CD4-positive, alpha-beta T cell (primary cell): ENCODE measurements at regions of chr1 and their contacts with region 1.

Region 1: GRCh38 chr1:89261926-89262515 is 10.6 kb downstream of the GBP5 start:
- DNase-seq: no peak
- ATAC-seq: no peak
- H3K4me3 ChIP-seq: no peak overlapping the region
- H3K4me3 Mint-ChIP-seq: no peak overlapping the region
- H3K27ac ChIP-seq: no peak overlapping the region
- H3K27ac Mint-ChIP-seq: peak overlapping the region; percentile 15
- H3K4me1 ChIP-seq: peaks cover 35% of the 10 kb centered on the region
- H3K4me1 Mint-ChIP-seq: peaks cover 66% of the 10 kb centered on the region
- H3K27me3 ChIP-seq: no peaks in the 10 kb centered on the region
- H3K27me3 Mint-ChIP-seq: no peaks in the 10 kb centered on the region
- CTCF ChIP-seq: no peak

Region 2: GRCh38 chr1:88780485-88780884 is 481.5 kb before region 1 on chr1:
- CTCF ChIA-PET with region 1: no interaction called
- POLR2A ChIA-PET with region 1: no interaction called
- intact Hi-C with region 1: no loop called
- DNase-seq: no peak
- ATAC-seq: no peak
- H3K4me3 ChIP-seq: no peak overlapping the region
- H3K4me3 Mint-ChIP-seq: no peak overlapping the region
- H3K27ac ChIP-seq: no peak overlapping the region
- H3K27ac Mint-ChIP-seq: no peak overlapping the region
- H3K4me1 ChIP-seq: no peaks in the 10 kb centered on the region
- H3K4me1 Mint-ChIP-seq: no peaks in the 10 kb centered on the region
- H3K27me3 ChIP-seq: no peaks in the 10 kb centered on the region
- H3K27me3 Mint-ChIP-seq: no peaks in the 10 kb centered on the region
- CTCF ChIP-seq: no peak

Region 3: GRCh38 chr1:89206373-89206772 is 55.6 kb before region 1 on chr1:
- CTCF ChIA-PET with region 1: no interaction called
- POLR2A ChIA-PET with region 1: no interaction called
- intact Hi-C with region 1: loop called in 1 of 2 experiments (anchors 5 kb)
- DNase-seq: no peak
- ATAC-seq: no peak
- H3K4me3 ChIP-seq: no peak overlapping the region
- H3K4me3 Mint-ChIP-seq: no peak overlapping the region
- H3K27ac ChIP-seq: no peak overlapping the region
- H3K27ac Mint-ChIP-seq: no peak overlapping the region
- H3K4me1 ChIP-seq: peaks cover 1% of the 10 kb centered on the region
- H3K4me1 Mint-ChIP-seq: peaks cover 12% of the 10 kb centered on the region
- H3K27me3 ChIP-seq: no peaks in the 10 kb centered on the region
- H3K27me3 Mint-ChIP-seq: no peaks in the 10 kb centered on the region
- CTCF ChIP-seq: no peak

Region 4: GRCh38 chr1:90100566-90100965 is 838.5 kb after region 1 on chr1:
- CTCF ChIA-PET with region 1: no interaction called
- POLR2A ChIA-PET with region 1: no interaction called
- intact Hi-C with region 1: no loop called
- DNase-seq: no peak
- ATAC-seq: no peak
- H3K4me3 ChIP-seq: no peak overlapping the region
- H3K4me3 Mint-ChIP-seq: no peak overlapping the region
- H3K27ac ChIP-seq: no peak overlapping the region
- H3K27ac Mint-ChIP-seq: no peak overlapping the region
- H3K4me1 ChIP-seq: no peaks in the 10 kb centered on the region
- H3K4me1 Mint-ChIP-seq: no peaks in the 10 kb centered on the region
- H3K27me3 ChIP-seq: peaks cover 2 to 6% of the 10 kb centered on the region in 2 experiments
- H3K27me3 Mint-ChIP-seq: no peaks in the 10 kb centered on the region
- CTCF ChIP-seq: no peak